ENCODE measurements at regions of chr11 and their contacts with region 1.

Region 1: DNA sequence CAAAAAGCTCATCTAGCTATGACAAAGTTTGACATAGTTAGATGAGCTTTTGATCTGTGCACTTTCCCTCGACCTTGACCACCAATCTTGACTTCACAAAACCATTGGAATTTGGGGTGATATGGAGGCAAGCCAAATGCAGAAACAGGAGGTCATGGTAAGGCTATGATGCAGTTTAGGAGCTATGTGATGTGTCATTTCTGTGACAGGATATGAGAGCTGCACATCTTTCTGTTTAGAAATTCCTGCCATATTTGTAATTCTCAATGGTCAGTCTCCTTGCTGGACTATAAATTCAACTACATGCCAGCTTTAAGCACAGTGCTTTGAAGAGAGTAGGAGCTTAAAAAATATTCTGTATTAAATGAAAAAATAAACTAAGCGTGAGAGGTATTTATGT is 12.9 kb downstream of the OR51B6 start:
- DNase-seq: peak; percentile 87
- H3K4me3 ChIP-seq: no peak overlapping the region
- H3K27ac ChIP-seq: peak overlapping the region; percentile 88
- H3K27me3 ChIP-seq: no peaks in the 10 kb centered on the region
- CTCF ChIP-seq: no peak

Region 2: GRCh38 chr11:5204787-5205186 is 159.4 kb before region 1 on chr11:
- CTCF ChIA-PET with region 1: interaction called, 25 read pairs
- POLR2A ChIA-PET with region 1: no interaction called
- DNase-seq: peak; percentile 58
- H3K4me3 ChIP-seq: no peak overlapping the region
- H3K27ac ChIP-seq: no peak overlapping the region
- H3K27me3 ChIP-seq: no peaks in the 10 kb centered on the region
- CTCF ChIP-seq: peak; percentile 67

Region 3: GRCh38 chr11:5280582-5281102 is 83.6 kb before region 1 on chr11:
- CTCF ChIA-PET with region 1: no interaction called
- POLR2A ChIA-PET with region 1: interaction called, 14 read pairs
- DNase-seq: peak; percentile 99
- H3K4me3 ChIP-seq: no peak overlapping the region
- H3K27ac ChIP-seq: no peak overlapping the region
- H3K27me3 ChIP-seq: no peaks in the 10 kb centered on the region
- CTCF ChIP-seq: no peak

Region 4: DNA sequence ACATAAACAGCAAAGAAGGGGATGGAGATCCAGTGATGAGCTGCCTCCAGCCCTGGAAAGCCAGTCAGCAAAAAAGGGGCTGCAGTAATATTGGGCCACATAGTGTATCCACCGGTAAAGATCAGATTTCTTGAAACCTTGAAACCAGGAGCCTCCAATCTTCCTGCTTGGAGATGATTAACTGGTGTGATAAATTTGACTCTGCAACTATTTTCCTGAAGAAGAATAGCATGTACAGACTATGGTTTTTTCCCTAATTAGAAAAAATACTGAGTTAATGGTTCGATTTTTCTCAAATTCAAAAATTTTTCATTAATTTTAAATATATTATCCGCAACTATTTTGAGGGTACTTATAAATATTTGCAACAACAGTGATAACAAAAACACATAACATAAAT is 40.0 kb before region 1 on chr11 and contains the start of gene OR51B2:
- CTCF ChIA-PET with region 1: no interaction called
- POLR2A ChIA-PET with region 1: no interaction called
- DNase-seq: no peak
- H3K4me3 ChIP-seq: no peak within 1 kb of the TSS
- H3K27ac ChIP-seq: no peak within 1 kb of the TSS
- H3K27me3 ChIP-seq: no peaks in the 10 kb centered on the region
- CTCF ChIP-seq: no peak
- polyA plus RNA-seq, gene OR51B2: not detected in 2 replicates

Region 5: DNA sequence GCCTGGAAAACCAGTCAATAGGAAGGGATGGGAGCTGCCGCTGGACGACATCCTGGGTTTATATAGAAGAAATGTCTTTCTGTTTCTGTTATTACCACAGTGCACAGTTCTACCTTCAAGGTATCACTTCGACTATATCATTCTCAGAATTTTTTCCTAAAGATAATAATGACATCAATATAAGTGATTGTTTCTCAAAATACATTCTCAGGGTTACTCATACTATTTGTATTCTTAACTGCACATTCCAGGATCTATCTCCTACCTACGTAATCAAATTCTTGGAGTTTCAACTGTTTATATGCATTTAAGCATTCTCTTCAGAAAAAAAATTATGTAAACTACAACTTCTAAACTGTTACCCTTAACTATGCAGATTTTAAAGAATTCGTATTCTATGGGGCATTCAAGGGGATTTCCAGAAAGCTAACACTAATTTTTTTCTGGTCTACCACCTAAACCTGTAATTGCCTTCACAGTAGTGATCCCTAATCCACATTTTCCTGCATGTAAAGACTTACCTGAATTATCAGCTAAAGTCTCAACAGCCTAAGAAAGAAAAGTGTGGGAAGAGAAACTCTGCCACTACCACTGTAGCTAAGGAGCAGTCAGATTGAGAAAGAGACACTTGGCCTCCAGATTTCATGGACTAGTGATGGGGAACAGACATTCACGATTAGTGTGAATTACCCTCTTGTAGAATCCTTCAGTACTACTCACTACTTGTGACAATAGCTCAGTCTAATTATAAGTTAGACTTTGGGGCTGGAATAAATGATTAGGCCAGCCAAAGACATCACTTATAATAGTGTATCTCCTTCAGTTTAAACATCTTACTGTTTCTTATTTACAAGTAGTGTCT is 20.5 kb before region 1 on chr11 and contains the start of gene OR51B5:
- CTCF ChIA-PET with region 1: interaction called, 3 read pairs
- POLR2A ChIA-PET with region 1: interaction called, 12 read pairs
- DNase-seq: peak; percentile 59
- H3K4me3 ChIP-seq: no peak within 1 kb of the TSS
- H3K27ac ChIP-seq: peak within 1 kb of the TSS; percentile 90
- H3K27me3 ChIP-seq: no peaks in the 10 kb centered on the region
- CTCF ChIP-seq: no peak
- polyA plus RNA-seq, gene OR51B5: 0.56 and 0.84 TPM in 2 replicates

Region 6: DNA sequence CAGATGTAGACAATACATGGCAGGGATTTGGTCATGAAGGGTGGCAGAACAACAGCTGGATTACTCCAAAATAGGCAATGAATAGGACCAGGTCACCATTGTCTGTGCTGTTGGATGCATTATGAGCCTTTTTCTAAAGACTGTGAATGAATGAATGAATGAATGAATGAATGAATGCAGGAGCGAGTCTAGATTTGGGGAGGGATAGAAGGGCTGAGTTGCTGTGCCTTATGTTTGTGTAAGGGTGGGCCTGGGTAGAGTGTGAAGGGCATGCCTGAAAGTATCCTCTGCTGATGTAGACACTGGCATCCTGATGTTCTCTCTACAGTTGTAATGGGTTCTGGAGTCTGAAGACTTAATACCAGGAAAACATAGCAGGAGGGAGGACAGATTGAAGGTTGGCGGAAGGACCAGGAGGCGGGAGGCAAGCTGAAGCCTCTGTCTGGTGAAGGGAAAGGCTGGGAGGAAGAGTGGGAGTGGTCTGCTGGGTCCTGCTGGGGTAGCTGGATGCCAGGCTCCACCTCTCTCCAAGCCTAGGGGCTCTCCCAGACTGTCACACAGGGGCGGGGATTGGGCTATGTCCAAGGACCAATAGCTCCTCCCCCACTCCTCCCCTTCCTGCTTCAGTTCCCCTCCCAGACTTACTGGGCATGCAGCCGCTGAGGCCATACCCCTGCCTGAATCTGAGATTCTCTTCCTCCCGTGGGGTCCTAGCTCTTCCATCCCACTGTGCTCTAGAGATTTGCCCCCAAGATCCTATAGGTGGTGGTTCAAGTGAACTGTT is 1104.7 kb after region 1 on chr11:
- CTCF ChIA-PET with region 1: no interaction called
- POLR2A ChIA-PET with region 1: no interaction called
- DNase-seq: peak; percentile 57
- H3K4me3 ChIP-seq: no peak overlapping the region
- H3K27ac ChIP-seq: no peak overlapping the region
- H3K27me3 ChIP-seq: no peaks in the 10 kb centered on the region
- CTCF ChIP-seq: no peak

Measured in AG04450 (cell line).